ENCODE measurements at regions of chr12 and their contacts with region 1.

Region 1: DNA sequence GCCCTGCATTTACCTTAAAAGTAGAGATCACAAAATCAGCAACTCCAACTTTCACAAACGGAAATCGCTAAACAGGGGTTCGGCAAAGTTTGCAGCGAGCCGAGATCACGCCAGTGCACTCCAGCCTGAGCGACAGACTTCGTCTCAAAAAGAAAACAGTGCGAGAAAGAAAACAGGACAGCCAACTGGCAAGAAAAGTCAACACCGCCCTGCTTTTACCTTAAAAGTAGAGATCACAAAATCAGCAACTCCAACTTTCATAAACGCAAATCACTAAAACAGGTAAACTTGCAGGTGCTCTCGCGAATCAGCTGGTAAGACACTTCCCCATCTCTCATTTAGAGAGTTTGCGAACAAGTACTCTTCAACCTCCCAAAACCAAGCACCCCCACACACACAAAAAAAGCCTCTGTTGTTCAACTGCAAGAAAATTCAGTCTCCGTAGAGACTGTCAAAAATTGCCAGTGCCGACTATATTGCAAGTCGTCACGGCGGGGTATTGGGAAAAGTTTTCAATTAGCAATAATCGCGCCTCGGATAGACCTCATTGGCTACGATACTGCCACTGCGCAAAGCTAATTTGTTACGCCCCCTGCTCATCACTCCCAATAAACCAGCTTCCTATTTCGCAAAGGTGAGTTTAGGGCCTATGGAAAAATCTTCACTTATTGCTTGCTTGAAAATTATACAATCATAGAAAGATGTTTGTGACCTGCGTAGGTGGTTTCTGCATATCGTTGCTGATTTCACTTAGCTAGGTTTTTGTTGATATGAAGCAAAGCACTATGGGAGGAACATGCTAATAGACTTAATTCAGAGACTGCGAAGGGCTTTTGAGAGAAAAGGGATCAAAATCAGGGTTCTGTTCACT is at the start of gene RNU4-1:
- DNase-seq: peak; percentile 30

Region 2: GRCh38 chr12:120194534-120195395 is 98.1 kb before region 1 on chr12 and contains the start of gene GCN1:
- CTCF ChIA-PET with region 1: no interaction called
- POLR2A ChIA-PET with region 1: interaction called, 84 read pairs
- DNase-seq: peak; percentile 80

Region 3: GRCh38 chr12:120234643-120235368 is 58.1 kb before region 1 on chr12:
- CTCF ChIA-PET with region 1: interaction called, 8 read pairs
- POLR2A ChIA-PET with region 1: interaction called, 269 read pairs
- DNase-seq: peak; percentile 73

Region 4: DNA sequence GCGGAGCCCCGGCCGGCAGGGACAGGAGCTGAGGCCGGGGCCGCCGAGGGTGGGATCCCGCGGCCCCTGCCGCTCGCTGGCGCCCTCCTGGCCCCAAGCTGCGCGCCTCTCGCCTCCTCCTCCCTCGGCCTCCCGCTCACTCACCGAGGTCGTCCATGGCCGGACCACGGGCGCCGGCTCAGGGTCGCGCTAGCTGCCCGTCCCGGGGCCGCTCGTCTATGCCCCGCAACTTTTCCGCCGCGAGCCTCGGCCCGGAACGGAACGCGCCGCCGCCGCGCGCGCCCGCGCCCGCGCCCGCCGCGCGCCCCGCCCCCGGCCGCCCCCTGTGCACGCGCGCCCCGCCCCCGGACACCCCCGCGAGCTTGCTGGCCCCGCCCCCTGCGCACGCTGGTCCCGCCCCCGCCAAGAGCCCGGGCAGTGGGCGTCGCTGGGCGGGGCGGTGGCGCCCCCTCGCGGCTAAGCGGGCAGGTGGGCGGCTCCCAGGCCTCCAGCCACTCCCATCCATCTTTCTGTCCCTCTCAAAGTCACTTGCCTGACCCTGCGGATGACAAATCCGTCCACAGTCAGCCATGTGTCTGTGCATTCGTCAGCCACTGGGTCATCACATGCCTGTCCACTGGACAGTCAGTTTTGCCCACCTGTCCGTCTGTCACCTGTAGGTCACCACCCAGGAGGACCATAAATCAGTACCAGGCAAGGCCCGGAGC is 27.3 kb before region 1 on chr12 and contains the start of gene PXN:
- CTCF ChIA-PET with region 1: interaction called, 5 read pairs
- POLR2A ChIA-PET with region 1: interaction called, 115 read pairs
- DNase-seq: peak; percentile 97

Region 5: GRCh38 chr12:120317224-120318105 is 24.6 kb after region 1 on chr12:
- CTCF ChIA-PET with region 1: no interaction called
- POLR2A ChIA-PET with region 1: interaction called, 48 read pairs
- DNase-seq: peak; percentile 98

Region 6: GRCh38 chr12:120437754-120438494 is 145.0 kb after region 1 on chr12 and contains the start of gene COX6A1:
- CTCF ChIA-PET with region 1: no interaction called
- POLR2A ChIA-PET with region 1: interaction called, 12 read pairs
- DNase-seq: peak; percentile 97

Region 7: DNA sequence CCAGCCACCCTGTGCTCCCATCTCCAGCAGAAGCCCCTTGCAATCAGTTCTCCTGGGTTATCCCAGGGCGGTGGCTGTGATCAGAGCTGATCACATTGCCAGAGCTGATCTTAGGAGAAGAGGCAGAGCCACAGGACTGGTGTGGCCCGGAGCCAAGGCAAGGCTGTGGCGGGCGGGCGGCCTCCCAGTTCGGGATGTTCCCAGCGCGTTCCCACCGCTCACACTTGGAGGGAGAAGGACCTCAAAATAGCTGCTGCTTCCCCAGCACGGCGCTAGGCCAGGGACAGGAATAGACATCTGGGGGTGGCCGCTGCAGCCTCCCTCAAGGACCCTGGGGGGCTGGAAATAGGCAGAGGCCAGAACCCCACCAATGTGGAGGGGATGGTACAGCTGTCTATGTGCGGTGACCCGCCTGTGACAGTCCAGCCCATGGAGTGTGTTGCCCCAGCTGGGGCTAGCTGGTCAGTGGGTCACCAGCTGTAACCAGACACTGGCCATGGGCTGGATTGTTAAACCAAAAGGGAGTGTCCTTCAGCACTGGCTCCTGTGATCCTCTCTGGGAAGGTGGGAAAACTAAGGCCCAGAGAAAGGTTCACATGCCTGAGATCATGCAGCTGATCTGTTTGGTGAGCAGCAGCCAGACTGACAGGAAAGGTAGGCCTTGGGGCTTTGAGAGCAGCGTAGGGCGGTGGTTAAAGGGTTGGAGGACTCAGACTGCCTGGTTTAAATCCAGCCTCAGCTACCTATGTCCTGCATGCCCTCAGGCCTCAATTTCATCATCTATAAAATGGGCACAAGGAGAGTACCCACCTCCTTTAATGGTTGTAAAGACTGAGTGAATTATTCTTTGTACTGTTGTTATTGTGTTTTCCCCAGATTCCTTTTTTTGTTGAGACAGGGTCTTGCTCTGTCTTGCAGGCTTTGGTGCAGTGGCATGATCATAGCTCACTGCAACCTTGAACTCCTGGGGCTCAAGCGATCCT is 296.3 kb after region 1 on chr12:
- CTCF ChIA-PET with region 1: no interaction called
- POLR2A ChIA-PET with region 1: no interaction called
- DNase-seq: no peak